Mammary epithelial cell (primary cell): ENCODE measurements at regions of chr3 and their contacts with region 1.

Region 1: DNA sequence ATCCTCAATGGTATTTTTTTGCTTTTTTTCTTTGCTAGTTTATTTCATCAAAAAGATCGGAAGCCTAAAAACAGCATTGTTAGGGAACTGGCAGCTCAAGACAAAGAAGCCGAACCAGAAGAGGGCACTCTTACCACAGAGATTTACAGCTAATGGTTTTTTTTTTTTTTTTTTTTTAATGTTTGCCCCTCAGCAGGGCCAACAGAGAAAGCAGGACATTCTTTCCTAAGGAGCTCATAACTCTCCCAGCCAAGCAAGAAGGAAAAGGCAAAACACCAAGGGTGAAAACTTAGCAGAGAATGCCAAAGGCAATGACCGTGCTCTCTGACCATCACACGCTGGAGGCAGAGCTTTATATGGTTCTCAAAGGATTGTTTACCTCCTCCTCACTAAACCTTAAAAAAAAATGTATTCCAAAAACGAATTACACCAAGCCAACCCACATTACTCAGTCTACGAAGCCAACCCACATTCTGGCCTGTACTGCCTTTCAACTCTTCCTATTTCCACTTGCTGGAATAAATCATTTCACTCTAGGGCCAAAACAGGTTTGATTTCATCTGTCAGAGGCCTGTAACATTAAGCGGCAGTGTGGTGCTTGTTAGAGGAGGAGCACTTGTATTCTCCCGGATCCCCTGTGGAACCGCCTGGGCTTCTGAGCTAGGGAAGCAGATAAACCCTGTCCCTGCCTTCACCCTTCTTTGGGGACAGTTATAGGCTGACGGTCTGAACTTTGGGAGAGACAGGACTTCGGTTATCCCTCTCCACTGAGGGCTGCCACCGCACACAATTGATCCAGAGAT is 35.6 kb upstream of the GYG1 start:
- DNase-seq: peak; percentile 48
- H3K4me3 ChIP-seq: no peak overlapping the region
- H3K27ac ChIP-seq: no peak overlapping the region
- H3K4me1 ChIP-seq: no peaks in the 10 kb centered on the region
- H3K27me3 ChIP-seq: no peaks in the 10 kb centered on the region
- CTCF ChIP-seq: peak; percentile 52 to 64

Region 2: DNA sequence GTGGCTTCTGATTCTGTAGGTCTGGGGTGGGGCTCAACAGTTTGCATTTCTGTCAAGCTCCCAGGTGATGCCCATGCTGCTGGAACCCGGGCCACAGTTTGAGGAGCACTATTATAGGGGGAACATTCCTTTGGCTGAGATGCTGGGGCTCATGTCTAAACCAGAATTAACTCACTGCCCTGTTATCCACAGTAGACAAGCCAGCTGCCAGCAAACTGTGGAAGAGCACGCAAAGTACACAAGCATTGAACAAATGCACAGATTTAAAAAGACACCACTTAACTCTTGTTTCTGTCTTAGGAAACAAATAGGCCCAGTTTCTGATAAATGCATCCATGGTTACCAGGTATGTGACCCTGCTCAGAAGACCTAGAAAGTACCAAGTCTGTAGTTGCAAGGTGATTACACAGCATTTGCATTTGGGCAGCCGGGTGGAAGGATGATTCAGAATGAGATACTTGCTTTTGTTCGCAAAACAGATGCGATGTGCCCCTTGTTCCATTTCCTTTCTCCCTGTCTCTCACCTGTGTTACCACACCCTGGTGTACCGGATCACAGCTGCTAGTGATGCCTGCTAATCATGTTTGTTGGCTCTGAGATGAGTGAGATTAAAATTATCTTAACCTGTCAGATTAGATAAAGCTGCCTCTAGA is 48.0 kb after region 1 on chr3:
- CTCF ChIA-PET with region 1: interaction called, 23 read pairs
- dilution Hi-C with region 1: no loop called
- in situ Hi-C with region 1: no loop called
- intact Hi-C with region 1: no loop called
- DNase-seq: peak; percentile 23
- H3K4me3 ChIP-seq: no peak overlapping the region
- H3K27ac ChIP-seq: no peak overlapping the region
- H3K4me1 ChIP-seq: peaks cover 3% of the 10 kb centered on the region
- H3K27me3 ChIP-seq: no peaks in the 10 kb centered on the region
- CTCF ChIP-seq: no peak

Region 3: GRCh38 chr3:149114458-149114857 is 158.7 kb after region 1 on chr3:
- CTCF ChIA-PET with region 1: no interaction called
- dilution Hi-C with region 1: no loop called
- in situ Hi-C with region 1: loop called in 1 of 2 experiments (anchors 10 kb)
- intact Hi-C with region 1: no loop called
- DNase-seq: no peak
- H3K4me3 ChIP-seq: no peak overlapping the region
- H3K27ac ChIP-seq: no peak overlapping the region
- H3K4me1 ChIP-seq: no peaks in the 10 kb centered on the region
- H3K27me3 ChIP-seq: no peaks in the 10 kb centered on the region
- CTCF ChIP-seq: no peak

Region 4: GRCh38 chr3:149129326-149130205 is 173.8 kb after region 1 on chr3 and contains the start of gene HPS3:
- CTCF ChIA-PET with region 1: interaction called, 35 read pairs
- dilution Hi-C with region 1: no loop called
- in situ Hi-C with region 1: loop called in 1 of 2 experiments (anchors 10 kb)
- intact Hi-C with region 1: no loop called
- DNase-seq: peak; percentile 87
- H3K4me3 ChIP-seq: peak within 1 kb of the TSS; percentile 83 to 92 (median 91)
- H3K27ac ChIP-seq: peak within 1 kb of the TSS; percentile 58
- H3K4me1 ChIP-seq: peaks cover 16% of the 10 kb centered on the region
- H3K27me3 ChIP-seq: no peaks in the 10 kb centered on the region
- CTCF ChIP-seq: no peak
- total RNA-seq, gene HPS3: 11.9 to 21.2 TPM

Region 5: DNA sequence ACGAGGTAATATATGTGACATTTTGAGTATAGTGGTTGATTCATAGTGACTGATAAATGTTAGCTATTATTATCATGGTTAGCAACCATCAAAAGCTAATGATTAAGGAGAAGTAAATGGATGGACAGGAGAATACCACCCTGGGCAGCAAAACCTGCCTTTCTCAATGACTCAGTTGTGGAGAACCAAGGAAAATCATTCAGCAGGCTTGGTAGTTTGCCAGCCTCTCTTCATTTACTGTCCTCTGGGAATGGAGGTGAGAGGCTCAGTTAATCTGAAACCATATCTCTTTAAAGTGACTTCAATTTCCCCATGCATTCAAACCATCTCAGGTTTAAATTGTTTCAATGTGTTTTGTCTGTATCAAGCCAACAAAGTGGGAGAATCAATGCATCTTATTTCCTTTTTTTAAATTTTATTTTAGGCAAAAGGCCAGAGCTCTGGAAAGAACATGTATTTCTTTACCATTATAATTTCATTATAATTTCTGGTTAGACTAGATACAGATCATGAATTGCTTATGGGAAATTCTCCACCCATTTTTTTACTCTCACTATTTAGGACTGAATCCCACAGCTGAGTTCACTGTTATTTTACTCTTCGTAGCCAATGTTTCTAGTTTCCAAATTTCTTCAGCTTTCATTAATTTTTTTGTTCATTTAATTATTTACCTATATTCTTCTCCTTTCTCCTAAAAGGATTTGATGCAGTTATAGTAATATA is 375.0 kb after region 1 on chr3:
- CTCF ChIA-PET with region 1: no interaction called
- dilution Hi-C with region 1: no loop called
- in situ Hi-C with region 1: no loop called
- intact Hi-C with region 1: loop called (anchors 5 kb)
- DNase-seq: peak; percentile 70
- H3K4me3 ChIP-seq: no peak overlapping the region
- H3K27ac ChIP-seq: no peak overlapping the region
- H3K4me1 ChIP-seq: peaks cover 6% of the 10 kb centered on the region
- H3K27me3 ChIP-seq: no peaks in the 10 kb centered on the region
- CTCF ChIP-seq: no peak

Region 6: GRCh38 chr3:149752051-149752787 is 796.5 kb after region 1 on chr3 and contains the start of gene COMMD2:
- CTCF ChIA-PET with region 1: interaction called, 10 read pairs
- dilution Hi-C with region 1: no loop called
- in situ Hi-C with region 1: no loop called
- intact Hi-C with region 1: no loop called
- DNase-seq: peak; percentile 92
- H3K4me3 ChIP-seq: peak within 1 kb of the TSS; percentile 85 to 100 (median 98)
- H3K27ac ChIP-seq: peak within 1 kb of the TSS; percentile 75
- H3K4me1 ChIP-seq: peaks cover 17% of the 10 kb centered on the region
- H3K27me3 ChIP-seq: no peaks in the 10 kb centered on the region
- CTCF ChIP-seq: peak; percentile 27 to 37
- total RNA-seq, gene COMMD2: 29.3 to 38.8 TPM